MCF 10A (cell line): ENCODE measurements at regions of chr17 and their contacts with region 1.

Region 1: DNA sequence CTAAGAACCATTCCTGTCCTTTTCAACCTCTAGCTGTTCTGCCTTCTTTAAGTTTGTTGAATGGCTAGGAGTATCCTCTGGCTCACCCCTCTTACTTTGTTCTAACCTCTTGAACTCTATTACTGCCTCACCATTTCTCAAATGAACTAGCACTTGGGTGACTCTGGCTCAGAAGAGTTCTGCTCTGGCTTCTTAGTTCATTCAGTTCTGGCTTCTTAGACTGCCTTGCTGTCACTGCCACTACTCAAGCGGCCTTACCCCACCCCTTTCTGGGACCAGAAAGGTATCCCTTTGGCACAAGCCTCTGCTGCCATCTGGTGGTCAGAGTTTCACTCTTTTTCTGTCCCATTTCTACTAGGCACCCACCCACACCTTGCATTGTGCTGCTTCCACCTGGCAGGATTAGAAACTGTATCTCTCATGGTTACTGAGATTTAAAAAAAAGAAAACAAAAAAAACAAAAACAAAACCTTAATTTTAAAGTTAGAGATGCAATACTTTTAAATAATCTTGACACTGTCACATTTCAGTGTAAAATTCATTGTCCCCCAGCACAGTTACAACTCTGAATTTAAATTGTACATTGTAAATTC is 6.8 kb upstream of the ABCA10 start:
- DNase-seq: peak; percentile 93
- H3K4me3 Mint-ChIP-seq: no peak overlapping the region
- H3K27ac Mint-ChIP-seq: no peak overlapping the region
- H3K4me1 Mint-ChIP-seq: peaks cover 5% of the 10 kb centered on the region
- H3K27me3 Mint-ChIP-seq: no peaks in the 10 kb centered on the region
- CTCF ChIP-seq: peak; percentile 86

Region 2: DNA sequence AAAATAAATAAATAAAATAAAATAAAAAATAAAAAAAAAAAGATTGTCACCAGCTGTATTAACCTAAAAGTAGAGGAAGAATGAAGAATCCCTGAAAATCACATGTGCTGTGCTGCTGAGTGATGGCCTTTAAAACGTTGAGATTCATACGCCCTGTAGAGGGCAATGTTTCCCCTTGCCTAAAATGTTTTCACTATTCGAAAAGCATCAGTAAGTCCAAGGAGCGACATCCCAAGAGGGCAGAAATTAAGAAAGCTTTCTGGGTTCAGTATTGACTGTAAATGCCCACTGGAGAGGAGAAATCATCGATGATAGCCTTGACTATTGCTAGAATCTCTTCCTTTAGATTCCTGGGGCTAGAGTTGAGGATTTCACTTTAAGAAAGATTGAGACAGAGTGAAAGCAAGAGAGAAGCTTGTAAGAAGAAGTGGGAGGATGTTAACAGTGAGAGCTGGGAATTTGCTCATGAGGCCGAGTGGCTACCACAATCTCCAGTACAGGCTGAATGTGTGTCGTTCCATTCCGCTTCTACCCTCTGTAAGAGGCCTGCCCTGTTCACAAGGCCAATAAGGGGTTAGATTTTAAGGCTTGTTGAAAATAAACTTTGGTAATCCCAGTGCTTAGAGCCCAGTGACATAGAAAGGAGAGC is 463.4 kb before region 1 on chr17:
- CTCF ChIA-PET with region 1: interaction called, 52 read pairs
- POLR2A ChIA-PET with region 1: interaction called, 3 read pairs
- intact Hi-C with region 1: loop called (anchors 1 kb)
- DNase-seq: peak; percentile 74
- H3K4me3 Mint-ChIP-seq: no peak overlapping the region
- H3K27ac Mint-ChIP-seq: no peak overlapping the region
- H3K4me1 Mint-ChIP-seq: peaks cover 6% of the 10 kb centered on the region
- H3K27me3 Mint-ChIP-seq: no peaks in the 10 kb centered on the region
- CTCF ChIP-seq: peak; percentile 61

Region 3: DNA sequence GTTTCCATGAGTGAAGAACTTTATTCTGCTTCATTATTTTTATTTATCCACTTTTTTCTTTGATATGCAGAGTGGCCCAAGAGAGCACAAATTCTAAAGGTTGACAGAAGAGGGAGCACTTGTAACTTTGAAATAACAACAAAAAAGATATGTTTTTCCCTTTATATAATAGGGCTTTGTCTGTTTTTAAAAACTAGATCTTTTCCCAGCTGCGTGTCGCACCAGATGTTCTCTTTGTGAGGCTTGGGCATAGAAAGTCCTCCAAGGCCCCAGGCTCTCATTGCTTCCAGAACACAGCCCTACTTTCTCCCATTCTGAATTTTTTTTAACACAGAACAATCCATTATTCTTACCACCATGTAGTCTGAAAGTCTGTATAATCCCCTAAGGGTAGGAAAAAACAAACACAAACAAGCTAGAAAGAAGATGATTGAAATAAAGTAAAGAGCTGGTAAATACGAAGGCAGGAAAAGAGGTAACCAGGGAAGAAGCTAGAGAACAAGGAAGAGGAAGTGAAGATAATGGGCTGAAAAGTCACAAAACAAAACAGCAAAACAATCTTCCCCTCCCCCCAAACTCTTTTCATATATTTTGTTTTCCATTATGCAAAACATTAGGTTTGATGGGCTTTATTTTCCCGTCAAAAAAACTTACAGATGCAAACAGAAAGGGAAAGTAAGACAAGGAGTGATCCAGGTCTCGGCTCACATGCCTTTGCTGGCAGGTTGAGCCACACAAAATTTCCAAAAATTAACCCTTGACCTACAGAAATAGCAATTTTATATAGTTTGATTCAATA is 440.6 kb before region 1 on chr17:
- CTCF ChIA-PET with region 1: interaction called, 9 read pairs
- POLR2A ChIA-PET with region 1: no interaction called
- intact Hi-C with region 1: loop called (anchors 5 kb)
- DNase-seq: peak; percentile 26
- H3K4me3 Mint-ChIP-seq: no peak overlapping the region
- H3K27ac Mint-ChIP-seq: peak overlapping the region; percentile 40
- H3K4me1 Mint-ChIP-seq: peaks cover 20% of the 10 kb centered on the region
- H3K27me3 Mint-ChIP-seq: no peaks in the 10 kb centered on the region
- CTCF ChIP-seq: peak; percentile 37

Region 4: GRCh38 chr17:68972119-68972704 is 263.2 kb before region 1 on chr17:
- CTCF ChIA-PET with region 1: interaction called, 4 read pairs
- POLR2A ChIA-PET with region 1: no interaction called
- intact Hi-C with region 1: loop called (anchors 1 kb)
- DNase-seq: peak; percentile 48
- H3K4me3 Mint-ChIP-seq: no peak overlapping the region
- H3K27ac Mint-ChIP-seq: no peak overlapping the region
- H3K4me1 Mint-ChIP-seq: no peaks in the 10 kb centered on the region
- H3K27me3 Mint-ChIP-seq: no peaks in the 10 kb centered on the region
- CTCF ChIP-seq: peak; percentile 63

Region 5: GRCh38 chr17:69141431-69142174 is 93.8 kb before region 1 on chr17 and contains the start of gene ABCA6:
- CTCF ChIA-PET with region 1: no interaction called
- POLR2A ChIA-PET with region 1: no interaction called
- intact Hi-C with region 1: loop called (anchors 1 kb)
- DNase-seq: peak; percentile 70
- H3K4me3 Mint-ChIP-seq: peak within 1 kb of the TSS; percentile 77
- H3K27ac Mint-ChIP-seq: peak within 1 kb of the TSS; percentile 97
- H3K4me1 Mint-ChIP-seq: peaks cover 38% of the 10 kb centered on the region
- H3K27me3 Mint-ChIP-seq: no peaks in the 10 kb centered on the region
- CTCF ChIP-seq: no peak
- total RNA-seq, gene ABCA6: 34.5 TPM in 2 replicates

Region 6: GRCh38 chr17:69348436-69348835 is 113.0 kb after region 1 on chr17:
- CTCF ChIA-PET with region 1: no interaction called
- POLR2A ChIA-PET with region 1: no interaction called
- intact Hi-C with region 1: no loop called
- DNase-seq: no peak
- H3K4me3 Mint-ChIP-seq: no peak overlapping the region
- H3K27ac Mint-ChIP-seq: no peak overlapping the region
- H3K4me1 Mint-ChIP-seq: peaks cover 24% of the 10 kb centered on the region
- H3K27me3 Mint-ChIP-seq: no peaks in the 10 kb centered on the region
- CTCF ChIP-seq: no peak